ENCODE measurements at regions of chr12 and their contacts with region 1.

Region 1: DNA sequence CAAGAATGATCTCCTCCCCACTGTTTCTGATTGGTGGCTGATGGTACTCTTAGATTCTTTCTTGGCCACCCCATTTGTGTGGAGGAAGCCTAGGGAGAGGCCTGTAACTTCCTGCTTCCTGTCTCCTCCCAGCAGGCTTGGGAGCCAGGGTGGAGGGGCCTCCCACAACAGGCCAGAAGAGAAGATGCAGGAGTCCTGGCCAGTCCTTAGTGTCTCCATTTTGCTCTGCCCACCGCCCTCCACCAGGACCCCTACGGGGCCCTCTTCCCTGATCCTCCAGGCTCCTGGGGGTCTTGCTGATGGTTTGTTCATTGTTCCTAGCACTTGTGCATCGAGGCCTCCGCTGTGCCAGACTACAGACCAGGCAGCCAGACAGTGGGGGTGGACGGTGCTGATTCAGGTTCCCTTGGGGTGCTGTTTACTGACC is 6.8 kb downstream of the TSPAN9 start:
- DNase-seq: peak; percentile 49 to 73 (median 61)
- ATAC-seq: peak; percentile 71 to 90 (median 75)
- H3K4me3 ChIP-seq: peak overlapping the region in 5 of 12 donors; percentile 2 to 31 (median 17)
- H3K27ac ChIP-seq: peak overlapping the region; percentile 19 to 88 (median 78)
- H3K4me1 ChIP-seq: peaks cover 3 to 90% (median 65%) of the 10 kb centered on the region in 12 donors
- H3K27me3 ChIP-seq: no peaks in the 10 kb centered on the region
- CTCF ChIP-seq: no peak
- POLR2A ChIP-seq: peak in 1 of 2 donors; percentile 46

Region 2: DNA sequence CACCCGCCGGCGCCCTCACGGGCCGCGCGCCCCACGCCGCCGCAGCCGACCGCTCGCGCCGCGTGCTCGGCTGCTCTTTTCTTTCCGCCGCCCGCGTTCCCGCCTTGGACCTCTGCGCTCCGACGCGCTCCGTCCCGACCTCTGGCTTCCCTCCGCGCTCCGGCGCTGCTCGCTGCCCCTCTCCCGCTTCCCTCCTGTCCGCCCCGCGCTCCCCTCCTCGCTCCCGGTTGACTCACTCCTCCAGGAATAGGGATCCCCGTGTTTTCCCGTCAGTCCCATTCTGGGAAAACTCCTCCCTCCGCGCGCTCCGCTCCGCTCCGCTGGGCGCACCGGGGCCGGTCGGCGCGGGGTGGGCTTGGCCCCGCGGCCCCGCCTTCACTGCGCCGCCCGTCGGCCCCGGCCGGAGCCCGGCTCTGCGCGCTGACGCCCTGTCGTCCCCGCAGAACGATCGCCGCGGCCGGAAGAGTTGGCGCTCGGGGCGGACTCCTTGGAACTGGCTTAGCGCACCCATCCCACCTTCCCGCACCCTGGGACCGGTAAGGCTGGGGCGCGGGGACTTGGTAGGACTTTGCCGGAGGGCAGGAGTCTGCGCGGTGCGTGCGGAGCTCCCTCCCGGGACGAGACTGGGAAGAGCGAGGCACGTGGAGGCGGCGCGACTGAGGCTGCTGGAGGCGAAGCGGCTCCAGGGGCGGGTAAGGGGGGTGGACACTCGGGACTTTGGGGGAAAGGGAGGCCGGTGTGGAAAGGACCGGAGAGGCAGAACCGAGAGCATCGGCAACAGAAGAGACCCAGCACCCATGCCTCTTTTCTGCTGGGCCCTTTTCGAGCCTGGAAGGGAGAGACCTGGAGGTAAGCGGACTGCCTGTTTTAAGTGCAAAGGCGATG is 124.2 kb before region 1 on chr12:
- intact Hi-C with region 1: no loop called
- DNase-seq: peak; percentile 44 to 86 (median 70)
- ATAC-seq: peak in 3 of 4 donors; percentile 29 to 74 (median 68)
- H3K4me3 ChIP-seq: peak overlapping the region; percentile 39 to 86 (median 66)
- H3K27ac ChIP-seq: peak overlapping the region; percentile 79 to 94 (median 85)
- H3K4me1 ChIP-seq: peaks cover 0 to 51% (median 21%) of the 10 kb centered on the region in 12 donors
- H3K27me3 ChIP-seq: peaks cover 0 to 25% (median 0%) of the 10 kb centered on the region in 9 donors
- CTCF ChIP-seq: peak in 2 of 12 donors; percentile 6 to 10
- POLR2A ChIP-seq: peak in 1 of 2 donors; percentile 43

Region 3: DNA sequence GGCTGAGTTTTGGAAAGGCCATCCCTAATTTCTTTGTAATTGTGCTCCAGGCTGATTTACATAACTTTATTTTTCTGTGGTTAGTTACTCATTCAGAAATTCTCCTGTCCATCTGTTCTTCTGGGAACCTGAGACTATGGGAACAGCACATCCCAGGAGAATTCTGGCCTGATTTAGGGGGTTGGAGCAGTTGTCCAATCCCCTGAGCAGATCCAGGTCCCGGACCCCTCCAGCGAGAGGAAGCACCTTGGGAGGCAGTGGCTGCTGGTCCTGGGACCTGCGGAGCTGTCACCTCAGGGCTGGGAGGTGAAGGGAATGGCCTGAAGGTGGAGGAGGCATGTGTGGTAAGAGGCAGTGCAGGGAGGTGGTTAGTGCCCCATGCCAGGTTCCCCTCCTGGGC is 33.7 kb after region 1 on chr12:
- intact Hi-C with region 1: loop called in 8 of 10 experiments (anchors 2 to 5 kb)
- DNase-seq: peak in 1 of 5 donors; percentile 20
- ATAC-seq: no peak
- H3K4me3 ChIP-seq: peak overlapping the region in 2 of 12 donors; percentile 7 to 10
- H3K27ac ChIP-seq: peak overlapping the region in 11 of 12 donors; percentile 53 to 92 (median 73)
- H3K4me1 ChIP-seq: peaks cover 21 to 63% (median 55%) of the 10 kb centered on the region in 12 donors
- H3K27me3 ChIP-seq: no peaks in the 10 kb centered on the region
- CTCF ChIP-seq: no peak
- POLR2A ChIP-seq: no peak

Region 4: GRCh38 chr12:3122835-3123678 is 39.1 kb after region 1 on chr12:
- intact Hi-C with region 1: loop called in 7 of 10 experiments (anchors 2 to 5 kb)
- DNase-seq: peak; percentile 75 to 85 (median 84)
- ATAC-seq: peak; percentile 43 to 83 (median 69)
- H3K4me3 ChIP-seq: no peak overlapping the region
- H3K27ac ChIP-seq: peak overlapping the region; percentile 38 to 86 (median 72)
- H3K4me1 ChIP-seq: peaks cover 21 to 58% (median 52%) of the 10 kb centered on the region in 12 donors
- H3K27me3 ChIP-seq: no peaks in the 10 kb centered on the region
- CTCF ChIP-seq: peak in 7 of 12 donors; percentile 12 to 44 (median 20)
- POLR2A ChIP-seq: no peak